Endothelial cell of umbilical vein (primary cell): ENCODE measurements at regions of chr2 and their contacts with region 1.

Region 1: DNA sequence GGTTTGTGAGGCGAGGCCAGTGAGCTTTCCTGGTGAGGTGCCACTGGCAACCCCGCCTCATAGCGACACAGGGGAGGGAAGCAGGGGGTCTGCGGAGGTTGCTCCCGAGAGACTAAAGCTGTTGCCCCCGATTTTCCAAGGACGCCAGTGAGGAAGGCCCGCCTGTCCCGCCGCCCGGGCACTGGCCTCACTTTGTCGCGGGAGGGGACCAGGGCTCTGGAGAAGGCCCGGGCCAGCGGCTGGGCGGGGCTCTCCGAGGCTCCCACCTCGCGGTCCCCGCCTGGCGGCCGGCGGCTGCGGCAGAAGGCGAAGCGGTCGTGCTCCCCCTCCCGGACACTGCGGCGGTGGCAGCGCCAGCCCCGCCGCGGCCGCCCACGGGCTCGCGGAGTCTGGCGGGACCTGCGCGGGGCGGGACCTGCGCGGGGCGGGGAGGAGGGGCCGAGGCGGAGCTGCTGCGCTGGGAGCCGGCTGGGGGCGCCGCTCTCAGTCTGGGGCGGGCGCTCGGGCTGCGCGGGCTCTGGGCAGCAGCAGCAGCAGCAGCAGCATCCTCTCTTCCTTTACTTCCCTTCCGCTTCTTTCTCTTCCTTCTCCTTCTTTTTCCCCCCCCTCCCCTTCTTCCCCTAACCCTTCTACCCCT is at the start of gene MAP2:
- DNase-seq: peak; percentile 88
- H3K4me3 ChIP-seq: peak within 1 kb of the TSS; percentile 77 to 95 (median 85)
- H3K27ac ChIP-seq: peak within 1 kb of the TSS; percentile 51
- H3K4me1 ChIP-seq: peaks cover 12% of the 10 kb centered on the region
- H3K27me3 ChIP-seq: peaks cover 0 to 2% of the 10 kb centered on the region in 2 experiments
- CTCF ChIP-seq: peak; percentile 86 to 91
- POLR2A ChIP-seq: peak; percentile 33
- total RNA-seq, gene MAP2: 46.1 and 61.2 TPM in 2 replicates

Region 2: DNA sequence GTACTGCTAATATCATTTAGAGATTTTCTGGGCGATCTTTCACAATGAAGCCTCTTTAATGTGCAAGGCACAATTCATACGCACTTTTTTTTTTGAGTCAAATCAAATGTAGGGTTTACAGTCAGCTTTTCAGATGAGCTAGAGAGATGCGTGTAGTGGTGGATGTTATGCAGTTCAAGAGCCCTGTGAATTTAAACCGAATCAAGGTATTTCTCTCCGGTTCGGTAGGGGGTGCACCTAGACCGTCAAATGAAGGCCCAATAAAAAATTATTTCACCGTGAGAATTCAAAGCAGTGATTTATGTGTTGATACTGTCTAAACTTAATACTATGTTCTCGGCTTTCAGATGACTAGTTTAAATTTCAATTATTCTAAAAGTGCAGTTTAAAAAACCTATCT is 1016.0 kb before region 1 on chr2:
- CTCF ChIA-PET with region 1: interaction called, 12 read pairs
- POLR2A ChIA-PET with region 1: no interaction called
- dilution Hi-C with region 1: no loop called
- intact Hi-C with region 1: no loop called
- DNase-seq: peak; percentile 11
- H3K4me3 ChIP-seq: no peak overlapping the region
- H3K27ac ChIP-seq: no peak overlapping the region
- H3K4me1 ChIP-seq: no peaks in the 10 kb centered on the region
- H3K27me3 ChIP-seq: peaks cover 32 to 42% of the 10 kb centered on the region in 2 experiments
- CTCF ChIP-seq: no peak
- POLR2A ChIP-seq: no peak

Region 3: DNA sequence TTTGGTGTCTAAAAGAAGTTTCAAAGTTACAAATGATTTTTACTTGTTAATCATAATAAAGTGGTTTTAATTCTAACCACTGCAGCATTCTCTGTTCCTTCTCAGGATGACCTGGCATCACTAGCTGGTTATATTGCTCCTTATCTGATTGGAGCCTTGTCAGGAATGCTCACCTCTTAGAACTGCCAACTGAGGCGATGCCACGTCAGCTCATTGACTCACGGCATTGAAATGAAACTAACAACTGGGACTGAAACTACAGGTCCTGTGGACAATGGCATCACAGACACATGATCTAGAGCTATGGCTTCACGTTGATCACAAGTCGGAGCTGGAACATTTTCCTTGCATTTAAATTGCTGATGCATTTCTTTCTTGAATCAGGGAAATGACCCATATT is 54.8 kb before region 1 on chr2:
- CTCF ChIA-PET with region 1: interaction called, 31 read pairs
- POLR2A ChIA-PET with region 1: interaction called, 3 read pairs
- dilution Hi-C with region 1: no loop called
- intact Hi-C with region 1: loop called (anchors 2 kb)
- DNase-seq: peak; percentile 96
- H3K4me3 ChIP-seq: no peak overlapping the region
- H3K27ac ChIP-seq: peak overlapping the region; percentile 4
- H3K4me1 ChIP-seq: peaks cover 23% of the 10 kb centered on the region
- H3K27me3 ChIP-seq: no peaks in the 10 kb centered on the region
- CTCF ChIP-seq: no peak
- POLR2A ChIP-seq: no peak

Region 4: GRCh38 chr2:209512971-209513370 is 89.3 kb after region 1 on chr2:
- CTCF ChIA-PET with region 1: interaction called, 20 read pairs
- POLR2A ChIA-PET with region 1: no interaction called
- dilution Hi-C with region 1: no loop called
- intact Hi-C with region 1: no loop called
- DNase-seq: no peak
- H3K4me3 ChIP-seq: no peak overlapping the region
- H3K27ac ChIP-seq: no peak overlapping the region
- H3K4me1 ChIP-seq: peaks cover 6% of the 10 kb centered on the region
- H3K27me3 ChIP-seq: no peaks in the 10 kb centered on the region
- CTCF ChIP-seq: no peak
- POLR2A ChIP-seq: no peak

Region 5: GRCh38 chr2:209556354-209556961 is 132.8 kb after region 1 on chr2:
- CTCF ChIA-PET with region 1: interaction called, 254 read pairs
- POLR2A ChIA-PET with region 1: no interaction called
- dilution Hi-C with region 1: no loop called
- intact Hi-C with region 1: loop called (anchors 1 kb)
- DNase-seq: peak; percentile 70
- H3K4me3 ChIP-seq: no peak overlapping the region
- H3K27ac ChIP-seq: no peak overlapping the region
- H3K4me1 ChIP-seq: no peaks in the 10 kb centered on the region
- H3K27me3 ChIP-seq: no peaks in the 10 kb centered on the region
- CTCF ChIP-seq: peak; percentile 48 to 57
- POLR2A ChIP-seq: no peak

Region 6: DNA sequence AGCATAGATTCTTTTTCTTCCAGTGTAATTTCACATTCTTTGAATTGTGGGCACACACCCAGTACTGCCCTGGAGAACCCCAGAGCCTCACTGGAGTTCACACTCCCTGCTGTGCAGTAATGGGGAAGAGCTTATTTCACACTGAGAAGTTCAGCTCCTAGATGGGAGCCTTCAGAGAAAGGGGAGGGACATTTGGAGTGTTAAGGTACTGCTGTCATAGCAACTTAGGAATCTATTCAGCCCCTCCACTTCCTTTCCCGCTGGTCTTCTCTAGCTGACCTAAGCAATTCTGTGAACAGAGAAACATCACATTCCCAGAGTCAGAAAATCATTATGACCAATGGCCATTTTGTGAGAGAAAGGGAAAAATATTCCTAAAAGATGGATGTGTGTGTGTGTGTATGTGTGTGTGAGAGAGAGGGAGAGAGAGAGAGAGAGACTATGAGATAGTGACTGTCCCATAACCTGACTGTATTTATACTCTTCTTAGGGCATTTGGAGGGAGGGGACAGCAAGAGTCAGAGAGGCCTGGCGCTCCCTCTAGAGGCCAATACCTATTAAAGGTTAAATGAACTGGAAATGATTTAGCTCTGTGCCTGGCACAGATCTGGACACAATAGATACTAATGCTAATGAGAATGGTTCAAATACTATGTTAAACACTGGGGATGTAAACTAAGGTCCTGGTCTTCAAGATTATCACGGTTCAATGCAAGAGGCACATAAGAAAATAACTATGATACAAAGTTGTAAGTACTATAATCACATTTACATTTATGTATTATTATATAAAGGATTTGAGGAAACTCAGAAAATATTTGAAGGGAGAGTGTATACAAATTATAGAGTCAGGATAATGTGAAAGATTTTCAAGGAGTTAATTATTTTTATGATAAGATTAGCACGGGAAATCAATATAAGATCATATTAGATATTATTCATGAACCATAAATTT is 537.3 kb after region 1 on chr2:
- CTCF ChIA-PET with region 1: interaction called, 19 read pairs
- POLR2A ChIA-PET with region 1: no interaction called
- dilution Hi-C with region 1: no loop called
- intact Hi-C with region 1: loop called (anchors 1 kb)
- DNase-seq: peak; percentile 65
- H3K4me3 ChIP-seq: no peak overlapping the region
- H3K27ac ChIP-seq: no peak overlapping the region
- H3K4me1 ChIP-seq: no peaks in the 10 kb centered on the region
- H3K27me3 ChIP-seq: peaks cover 2 to 8% of the 10 kb centered on the region in 2 experiments
- CTCF ChIP-seq: peak; percentile 57 to 64
- POLR2A ChIP-seq: no peak